ENCODE measurements at regions of chr13 and their contacts with region 1.

Region 1: GRCh38 chr13:48853728-48854102 is 122.0 kb upstream of the FNDC3A start:
- DNase-seq: peak; percentile 50
- ATAC-seq: peak; percentile 82
- H3K4me3 Mint-ChIP-seq: no peak overlapping the region
- H3K27ac Mint-ChIP-seq: no peak overlapping the region
- H3K4me1 Mint-ChIP-seq: peaks cover 45% of the 10 kb centered on the region
- H3K27me3 Mint-ChIP-seq: peaks cover 9% of the 10 kb centered on the region

Region 2: GRCh38 chr13:48885027-48885395 is 31.3 kb after region 1 on chr13:
- CTCF ChIA-PET with region 1: interaction called, 3 read pairs
- POLR2A ChIA-PET with region 1: no interaction called
- intact Hi-C with region 1: loop called in 1 of 2 experiments (anchors 2 kb)
- DNase-seq: no peak
- ATAC-seq: no peak
- H3K4me3 Mint-ChIP-seq: no peak overlapping the region
- H3K27ac Mint-ChIP-seq: peak overlapping the region; percentile 58
- H3K4me1 Mint-ChIP-seq: peaks cover 62% of the 10 kb centered on the region
- H3K27me3 Mint-ChIP-seq: peaks cover 3% of the 10 kb centered on the region

Measured in activated CD4-positive, alpha-beta T cell treated with anti-CD3 and anti-CD28 coated beads for 36 hours (primary cell).